PC-3 (cell line): ENCODE measurements at regions of chrX and their contacts with region 1.

Region 1: GRCh38 chrX:101617211-101618191 is at the start of gene ARMCX6:
- DNase-seq: peak; percentile 58
- ATAC-seq: peak; percentile 84
- H3K4me3 ChIP-seq: peak within 1 kb of the TSS; percentile 85
- H3K27ac ChIP-seq: no peak within 1 kb of the TSS
- H3K4me1 ChIP-seq: peaks cover 11% of the 10 kb centered on the region; the same call in 1 of the 2 replicates
- H3K27me3 ChIP-seq: no peaks in the 10 kb centered on the region
- CTCF ChIP-seq: peak; percentile 52
- total RNA-seq, gene ARMCX6: 33.7 and 52.8 TPM in 2 replicates

Region 2: GRCh38 chrX:101736651-101737050 is 119.2 kb after region 1 on chrX:
- CTCF ChIA-PET with region 1: no interaction called
- POLR2A ChIA-PET with region 1: no interaction called
- intact Hi-C with region 1: no loop called
- DNase-seq: no peak
- ATAC-seq: no peak
- H3K4me3 ChIP-seq: no peak overlapping the region
- H3K27ac ChIP-seq: no peak overlapping the region
- H3K4me1 ChIP-seq: no peaks in the 10 kb centered on the region
- H3K27me3 ChIP-seq: no peaks in the 10 kb centered on the region
- CTCF ChIP-seq: no peak

Region 3: DNA sequence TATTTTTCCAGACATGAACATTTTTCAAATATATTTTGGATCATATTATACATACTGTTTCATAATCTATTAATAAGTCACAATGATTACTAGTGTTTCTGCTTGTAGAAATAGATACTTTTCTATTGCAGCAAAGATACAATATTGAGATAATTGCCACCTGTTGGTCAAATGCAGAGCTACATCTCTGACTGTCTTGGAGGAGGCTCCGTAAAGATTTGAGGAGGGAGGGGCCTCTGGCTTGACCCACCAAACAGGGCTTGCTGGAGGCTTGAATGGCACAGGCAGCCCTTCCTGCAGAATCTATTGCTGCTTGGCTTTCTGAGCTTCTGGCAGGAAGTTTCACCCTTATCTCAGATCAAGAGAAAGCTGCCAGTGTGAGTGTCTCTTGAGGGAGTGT is 141.5 kb after region 1 on chrX:
- CTCF ChIA-PET with region 1: no interaction called
- POLR2A ChIA-PET with region 1: no interaction called
- intact Hi-C with region 1: loop called (anchors 5 kb)
- DNase-seq: peak; percentile 65
- ATAC-seq: peak; percentile 83
- H3K4me3 ChIP-seq: no peak overlapping the region
- H3K27ac ChIP-seq: no peak overlapping the region
- H3K4me1 ChIP-seq: no peaks in the 10 kb centered on the region
- H3K27me3 ChIP-seq: no peaks in the 10 kb centered on the region
- CTCF ChIP-seq: peak; percentile 60